Motor neuron (in vitro differentiated cells): ENCODE measurements at regions of chrX and their contacts with region 1.

Region 1: GRCh38 chrX:129606918-129607317 is 47.8 kb downstream of the APLN start:
- ATAC-seq: peak in 7 of 8 experiments; percentile 11 to 74 (median 69)
- H3K4me3 ChIP-seq: no peak overlapping the region
- H3K27ac ChIP-seq: no peak overlapping the region
- H3K4me1 ChIP-seq: peaks cover 0 to 6% of the 10 kb centered on the region in 2 donors

Region 2: DNA sequence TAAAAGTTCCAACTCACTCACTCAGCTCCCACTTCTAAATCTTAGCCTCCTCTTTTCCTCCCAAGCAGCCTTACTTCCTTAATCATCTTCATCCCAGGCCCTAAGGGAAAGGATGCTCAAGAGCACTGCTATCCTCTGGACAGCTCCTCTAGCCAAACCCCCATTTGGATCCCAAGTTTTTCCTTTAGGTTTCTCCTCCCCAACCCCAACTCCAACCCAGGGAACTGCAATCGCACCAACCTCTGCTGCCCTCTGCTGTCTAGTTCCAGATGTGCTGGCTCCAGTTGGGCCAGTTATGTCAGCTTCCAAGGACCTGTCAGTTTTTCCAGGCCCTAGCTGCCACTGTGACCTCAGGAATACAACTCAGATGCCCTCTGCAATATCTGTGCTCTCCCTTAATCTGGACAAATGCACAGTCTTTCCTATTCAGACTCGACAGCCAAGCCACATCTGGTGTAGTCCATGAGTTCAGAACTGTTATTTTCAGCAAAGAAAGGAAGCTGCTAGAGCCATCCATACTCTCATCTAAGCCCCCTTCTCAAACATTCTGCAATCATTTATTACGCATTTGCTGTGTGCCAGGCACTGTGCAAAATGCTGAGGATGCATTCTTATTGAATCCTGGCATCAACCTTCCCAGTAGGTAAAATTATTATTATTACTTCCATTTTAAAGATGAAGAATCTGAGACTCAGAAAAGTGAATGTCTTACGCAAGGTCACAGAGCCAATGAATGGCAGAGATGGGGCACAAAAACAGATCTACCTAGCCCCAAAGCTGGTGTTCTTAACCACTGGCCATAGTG is 119.6 kb after region 1 on chrX:
- in situ Hi-C with region 1: loop called in 3 of 9 experiments (anchors 25 kb)
- ATAC-seq: peak in 7 of 8 experiments; percentile 38 to 84 (median 62)
- H3K4me3 ChIP-seq: no peak overlapping the region
- H3K27ac ChIP-seq: no peak overlapping the region
- H3K4me1 ChIP-seq: no peaks in the 10 kb centered on the region

Region 3: GRCh38 chrX:130060122-130061069 is 453.5 kb after region 1 on chrX:
- in situ Hi-C with region 1: loop called in 7 of 9 experiments (anchors 25 kb)
- ATAC-seq: peak; percentile 87 to 94 (median 90)
- H3K4me3 ChIP-seq: peak overlapping the region; percentile 49 to 75 (median 65)
- H3K27ac ChIP-seq: no peak overlapping the region
- H3K4me1 ChIP-seq: peaks cover 0 to 3% of the 10 kb centered on the region in 2 donors